AG04450 (cell line): ENCODE measurements at regions of chr20 and their contacts with region 1.

Region 1: DNA sequence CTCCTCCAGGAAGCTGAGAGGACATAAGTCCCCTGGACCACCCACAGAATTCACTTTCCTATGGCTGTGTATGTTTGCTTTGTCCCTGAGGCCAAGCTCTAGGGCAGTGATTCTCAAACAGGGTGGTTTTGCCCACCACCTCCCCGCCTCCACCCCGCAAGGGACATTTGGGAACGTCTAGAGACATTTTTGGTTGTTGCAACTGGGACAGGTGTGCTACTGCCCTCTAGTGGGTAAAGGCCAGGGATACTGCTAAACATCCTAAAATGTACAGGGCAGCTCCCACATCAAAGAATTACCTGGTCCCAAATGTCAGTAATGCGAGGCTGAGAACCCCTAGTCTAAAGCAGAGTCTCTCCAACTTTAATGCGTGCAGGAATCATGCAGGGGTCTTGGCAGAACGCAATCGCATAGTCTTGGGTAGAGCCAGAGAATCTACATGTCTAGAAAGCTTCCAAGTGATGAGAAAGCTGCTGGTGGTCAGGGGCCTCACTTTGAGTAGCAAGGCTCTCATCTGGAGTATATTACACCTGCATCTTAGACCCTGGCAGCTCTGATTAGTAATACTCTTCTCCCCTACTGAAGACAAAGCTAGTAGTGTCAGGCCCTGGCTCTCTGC is 5.1 kb downstream of the KCNS1 start:
- DNase-seq: no peak
- H3K4me3 ChIP-seq: no peak overlapping the region
- H3K27ac ChIP-seq: no peak overlapping the region
- H3K27me3 ChIP-seq: peaks cover 30% of the 10 kb centered on the region
- CTCF ChIP-seq: peak; percentile 83

Region 2: DNA sequence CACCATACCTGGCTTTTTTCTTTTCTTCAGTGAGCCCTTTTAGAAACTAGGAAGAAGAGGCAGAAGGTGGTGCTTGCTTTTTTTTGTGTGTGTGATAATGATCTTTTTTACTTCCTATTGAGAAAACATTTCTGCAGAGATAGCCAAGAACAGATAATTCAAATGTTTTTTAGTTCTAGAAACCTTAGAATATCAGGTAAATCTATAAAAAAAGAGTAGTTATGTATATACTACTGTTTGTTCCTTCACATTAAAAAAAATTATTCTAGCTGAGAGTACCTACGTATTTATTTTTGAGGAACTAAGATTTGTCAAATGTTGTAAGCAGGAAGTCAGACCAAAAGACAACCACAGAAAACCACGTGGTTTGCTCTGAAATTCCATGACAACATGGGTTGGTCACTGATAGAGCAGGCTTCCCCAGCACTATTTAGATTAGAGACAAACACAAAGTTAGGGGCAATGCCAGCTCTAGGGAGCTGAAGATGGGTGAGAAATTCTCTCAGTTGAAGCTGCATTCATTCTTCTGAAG is 116.7 kb before region 1 on chr20:
- CTCF ChIA-PET with region 1: interaction called, 15 read pairs
- POLR2A ChIA-PET with region 1: no interaction called
- DNase-seq: no peak
- H3K4me3 ChIP-seq: no peak overlapping the region
- H3K27ac ChIP-seq: no peak overlapping the region
- H3K27me3 ChIP-seq: no peaks in the 10 kb centered on the region
- CTCF ChIP-seq: no peak

Region 3: DNA sequence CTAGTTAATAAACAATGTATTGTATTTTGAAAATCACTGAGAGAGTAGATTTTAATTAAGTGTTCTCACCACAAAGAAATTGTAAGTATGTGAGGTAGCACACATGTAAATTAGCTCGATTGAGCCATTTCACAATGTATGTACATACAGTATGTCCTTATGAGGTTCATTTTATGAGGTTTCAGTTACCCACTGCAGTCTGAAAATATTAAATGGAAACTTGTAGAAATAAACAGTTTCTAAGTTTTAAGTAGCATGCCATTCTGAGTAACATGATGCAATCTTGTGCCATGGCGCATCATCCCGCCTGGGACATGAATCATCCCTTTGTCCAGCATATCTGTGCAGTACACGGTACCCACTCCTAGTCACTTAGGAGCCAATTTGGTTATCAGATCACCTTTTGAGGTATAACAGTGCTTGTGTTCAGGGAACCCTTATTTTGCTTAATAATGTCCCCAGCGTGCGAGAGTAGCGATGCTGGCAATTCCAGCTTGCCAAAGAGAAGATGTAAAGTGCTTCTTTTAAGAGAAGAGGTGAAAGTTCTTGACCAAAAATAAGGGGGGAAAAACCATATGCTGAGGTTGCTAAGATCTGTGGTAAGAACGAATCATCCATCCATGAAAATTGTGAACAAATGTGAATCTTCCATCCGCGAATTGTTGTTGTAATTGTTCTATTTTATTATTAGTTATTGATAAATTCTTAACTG is 59.7 kb before region 1 on chr20:
- CTCF ChIA-PET with region 1: interaction called, 275 read pairs
- POLR2A ChIA-PET with region 1: no interaction called
- DNase-seq: peak; percentile 42
- H3K4me3 ChIP-seq: no peak overlapping the region
- H3K27ac ChIP-seq: peak overlapping the region; percentile 33
- H3K27me3 ChIP-seq: no peaks in the 10 kb centered on the region
- CTCF ChIP-seq: no peak

Region 4: GRCh38 chr20:45070932-45071632 is 24.8 kb before region 1 on chr20:
- CTCF ChIA-PET with region 1: interaction called, 44 read pairs
- POLR2A ChIA-PET with region 1: no interaction called
- DNase-seq: no peak
- H3K4me3 ChIP-seq: no peak overlapping the region
- H3K27ac ChIP-seq: no peak overlapping the region
- H3K27me3 ChIP-seq: no peaks in the 10 kb centered on the region
- CTCF ChIP-seq: no peak

Region 5: GRCh38 chr20:45124365-45124764 is 28.5 kb after region 1 on chr20 and contains the start of gene WFDC12:
- CTCF ChIA-PET with region 1: interaction called, 15 read pairs
- POLR2A ChIA-PET with region 1: no interaction called
- DNase-seq: no peak
- H3K4me3 ChIP-seq: no peak within 1 kb of the TSS
- H3K27ac ChIP-seq: no peak within 1 kb of the TSS
- H3K27me3 ChIP-seq: peaks cover 6% of the 10 kb centered on the region
- CTCF ChIP-seq: no peak
- polyA plus RNA-seq, gene WFDC12: not detected in 2 replicates

Region 6: DNA sequence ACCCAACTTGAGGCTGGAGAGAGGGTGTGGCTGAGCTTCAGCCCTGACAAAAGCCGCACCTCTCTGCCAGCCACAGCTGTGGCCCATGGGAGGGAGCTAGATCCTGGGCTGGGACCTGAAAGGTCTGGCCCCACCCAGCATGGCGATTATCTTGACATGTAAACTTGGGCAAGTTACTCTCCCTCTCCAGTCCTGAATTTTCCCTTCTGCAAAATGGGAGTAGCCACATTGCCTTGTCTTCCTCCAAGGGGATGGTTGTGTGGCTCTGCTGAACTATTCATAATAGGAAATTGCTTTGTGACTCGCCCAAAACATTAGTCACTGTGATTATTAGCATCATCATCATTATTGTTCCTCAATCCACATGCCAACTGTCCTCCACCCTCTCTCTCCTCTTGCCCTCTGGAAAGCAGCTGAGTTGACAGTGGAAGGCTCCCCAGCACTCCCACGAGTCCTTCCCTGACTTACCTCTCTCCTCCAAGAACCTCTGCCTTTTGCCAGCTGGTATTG is 187.7 kb after region 1 on chr20:
- CTCF ChIA-PET with region 1: no interaction called
- POLR2A ChIA-PET with region 1: no interaction called
- DNase-seq: no peak
- H3K4me3 ChIP-seq: no peak overlapping the region
- H3K27ac ChIP-seq: no peak overlapping the region
- H3K27me3 ChIP-seq: peaks cover 18% of the 10 kb centered on the region
- CTCF ChIP-seq: no peak